GM10248 (cell line): ENCODE measurements at regions of chr20 and their contacts with region 1.

Region 1: DNA sequence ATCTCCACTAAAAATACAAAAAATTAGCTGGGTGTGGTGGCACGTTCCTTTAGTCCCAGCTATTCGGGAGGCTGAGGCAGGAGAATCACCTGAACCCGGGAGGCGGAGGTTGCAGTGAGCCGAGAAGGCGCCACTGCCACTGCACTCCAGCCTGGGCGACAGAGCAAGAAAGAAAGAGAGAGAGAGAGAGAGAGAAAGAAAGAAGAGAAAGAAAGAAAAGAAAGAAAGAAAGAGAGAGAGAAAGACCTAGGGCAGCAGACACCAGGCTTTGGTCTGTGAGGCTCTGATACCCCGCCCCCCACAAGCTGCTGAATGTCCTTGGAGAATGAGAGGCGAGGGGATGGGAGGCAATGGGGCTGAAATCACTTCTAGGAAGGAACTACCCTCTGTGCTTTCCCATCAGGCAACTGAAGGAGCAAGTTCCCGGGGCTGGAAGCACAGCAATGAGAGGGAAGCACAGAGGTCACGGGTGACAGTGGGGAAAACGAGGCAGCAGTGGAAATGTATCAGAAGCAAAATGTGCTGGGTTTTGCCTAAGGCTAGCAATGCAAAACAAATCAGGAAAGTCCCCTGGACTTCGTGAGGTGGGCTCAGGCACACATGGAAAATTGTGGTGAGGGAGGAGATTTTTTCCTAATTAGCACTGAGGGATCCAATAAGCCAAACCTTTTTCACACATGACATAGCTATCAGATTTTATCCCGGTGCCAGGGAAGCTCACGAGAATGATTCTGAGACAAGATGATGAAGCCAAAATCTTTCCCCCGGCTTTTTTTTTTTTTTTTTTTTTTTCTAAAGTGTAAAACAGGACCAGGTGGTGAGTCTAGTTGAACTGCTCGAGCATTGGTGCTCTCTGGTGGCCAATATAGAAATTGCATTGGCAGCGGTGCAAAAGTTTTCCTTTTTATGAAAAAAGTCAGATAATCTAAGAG is 16.9 kb upstream of the ARFGEF2 start:
- DNase-seq: peak; percentile 72
- CTCF ChIP-seq: peak; percentile 66

Region 2: DNA sequence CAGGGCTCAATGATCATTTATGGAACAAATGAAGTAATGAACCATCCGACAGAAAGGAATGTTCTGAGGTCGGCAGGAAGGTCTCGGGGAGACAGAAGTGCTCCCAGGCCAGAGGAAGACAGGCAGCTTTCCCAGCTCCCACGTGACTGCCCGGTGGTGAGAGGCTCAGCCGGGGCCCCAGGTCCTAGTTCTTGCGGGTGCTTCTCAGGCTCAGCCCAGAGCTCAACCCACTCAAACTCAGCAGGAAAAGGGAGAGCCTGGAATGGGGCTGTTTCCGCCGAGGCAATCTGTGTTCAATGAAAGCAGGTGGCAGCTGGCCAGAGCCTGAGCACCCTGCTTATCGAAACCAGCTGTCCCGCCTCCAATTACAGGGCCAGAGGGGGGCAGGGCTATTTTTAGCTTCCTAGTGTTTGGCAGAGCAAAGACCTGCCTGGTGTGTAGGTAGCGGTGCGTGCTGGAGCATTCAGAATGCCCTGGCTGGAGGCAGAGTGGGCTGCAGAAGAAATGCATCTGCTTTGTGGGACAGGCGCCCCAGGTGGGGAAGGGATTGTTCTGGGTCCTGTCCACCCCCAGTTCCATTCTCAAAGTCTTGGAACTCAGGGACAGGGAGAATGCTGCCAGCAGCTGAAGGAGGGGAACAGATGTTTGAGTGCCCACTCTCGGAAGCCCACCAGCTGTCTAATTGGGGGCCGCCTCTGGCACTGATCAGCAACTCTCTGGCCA is 221.9 kb before region 1 on chr20:
- CTCF ChIA-PET with region 1: interaction called, 7 read pairs
- POLR2A ChIA-PET with region 1: interaction called, 14 read pairs
- DNase-seq: no peak
- CTCF ChIP-seq: no peak

Region 3: DNA sequence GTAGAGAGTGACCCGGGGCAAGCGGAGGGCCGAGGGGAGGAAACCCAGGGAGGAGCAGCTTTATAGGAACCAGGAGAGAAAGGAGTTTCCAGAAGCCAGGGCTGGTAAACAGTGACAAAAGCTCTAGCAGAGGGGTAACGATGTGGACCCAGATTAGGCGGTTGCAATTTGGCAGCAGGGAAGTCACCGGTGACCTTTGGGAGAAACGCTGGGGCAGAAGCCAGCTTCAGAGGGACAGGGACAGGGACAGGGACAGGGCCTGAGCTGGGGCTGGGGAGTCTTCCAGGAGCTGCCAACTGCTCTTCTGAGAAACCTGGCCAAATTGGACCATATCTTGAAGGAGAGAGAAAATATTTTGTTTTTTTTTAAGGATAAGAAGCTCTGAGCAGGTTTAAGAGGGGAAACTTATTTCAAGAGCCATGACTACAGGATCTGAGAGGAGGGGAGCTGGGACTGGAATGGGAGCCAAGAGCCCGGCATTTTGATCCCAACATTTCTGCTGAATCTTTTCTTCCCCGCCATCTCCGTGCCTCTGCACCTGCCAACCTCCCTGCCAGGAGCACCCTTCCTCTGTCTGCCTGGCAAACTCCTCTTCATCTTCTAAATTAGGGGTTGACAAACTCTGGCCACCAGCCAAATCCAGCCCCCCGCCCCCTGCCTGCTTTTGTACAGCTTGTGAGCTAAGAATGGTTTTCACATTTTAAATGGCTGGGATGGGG is 54.2 kb before region 1 on chr20:
- CTCF ChIA-PET with region 1: interaction called, 12 read pairs
- POLR2A ChIA-PET with region 1: no interaction called
- DNase-seq: no peak
- CTCF ChIP-seq: no peak

Region 4: GRCh38 chr20:48875911-48876640 is 28.6 kb before region 1 on chr20:
- CTCF ChIA-PET with region 1: interaction called, 12 read pairs
- POLR2A ChIA-PET with region 1: no interaction called
- DNase-seq: no peak
- CTCF ChIP-seq: no peak

Region 5: DNA sequence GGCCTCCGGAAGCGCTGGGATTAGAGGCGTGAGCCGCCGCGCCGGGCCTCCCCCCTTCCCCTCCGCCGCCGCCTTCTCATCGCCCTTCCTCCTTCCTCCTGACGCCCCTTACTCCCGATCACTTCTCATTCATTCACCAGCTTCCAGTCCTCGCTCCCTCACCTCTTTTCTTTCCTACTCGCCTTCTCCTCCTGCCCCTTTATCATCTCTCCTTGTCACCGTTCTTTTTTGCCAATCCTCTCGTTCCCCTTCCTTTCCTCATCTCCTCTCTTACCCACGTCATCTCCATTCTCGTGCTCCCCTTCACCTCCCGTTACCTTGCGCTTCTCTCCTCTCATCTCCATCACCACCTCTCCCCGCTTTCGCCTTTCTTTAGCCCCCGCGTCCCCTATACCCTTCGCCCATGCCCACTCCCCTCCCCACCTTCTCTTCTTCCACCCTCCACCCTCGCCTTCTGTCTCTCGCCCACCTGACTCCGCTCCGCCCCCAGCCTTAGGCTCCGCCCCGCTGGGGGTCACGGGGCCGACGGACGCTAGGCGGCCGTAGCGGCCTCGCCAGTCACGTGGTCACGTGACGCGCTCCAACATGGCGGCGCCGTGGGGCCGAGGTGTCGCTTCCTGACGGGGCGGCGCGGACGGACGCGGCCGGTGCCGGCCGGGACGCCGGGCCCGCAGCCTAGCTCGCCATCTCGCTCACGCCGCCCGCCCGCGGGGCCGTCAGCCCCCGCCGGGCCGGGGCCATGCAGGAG is 16.7 kb after region 1 on chr20 and contains the start of gene ARFGEF2:
- CTCF ChIA-PET with region 1: interaction called, 12 read pairs
- POLR2A ChIA-PET with region 1: no interaction called
- DNase-seq: peak; percentile 98
- CTCF ChIP-seq: no peak